ENCODE measurements at regions of chr12 and their contacts with region 1.

Region 1: GRCh38 chr12:111664961-111665865 is 20.5 kb downstream of the BRAP start:
- DNase-seq: no peak
- ATAC-seq: no peak
- H3K4me3 ChIP-seq: no peak overlapping the region
- H3K27ac ChIP-seq: no peak overlapping the region
- H3K4me1 ChIP-seq: no peaks in the 10 kb centered on the region
- H3K27me3 ChIP-seq: no peaks in the 10 kb centered on the region
- CTCF ChIP-seq: no peak

Region 2: DNA sequence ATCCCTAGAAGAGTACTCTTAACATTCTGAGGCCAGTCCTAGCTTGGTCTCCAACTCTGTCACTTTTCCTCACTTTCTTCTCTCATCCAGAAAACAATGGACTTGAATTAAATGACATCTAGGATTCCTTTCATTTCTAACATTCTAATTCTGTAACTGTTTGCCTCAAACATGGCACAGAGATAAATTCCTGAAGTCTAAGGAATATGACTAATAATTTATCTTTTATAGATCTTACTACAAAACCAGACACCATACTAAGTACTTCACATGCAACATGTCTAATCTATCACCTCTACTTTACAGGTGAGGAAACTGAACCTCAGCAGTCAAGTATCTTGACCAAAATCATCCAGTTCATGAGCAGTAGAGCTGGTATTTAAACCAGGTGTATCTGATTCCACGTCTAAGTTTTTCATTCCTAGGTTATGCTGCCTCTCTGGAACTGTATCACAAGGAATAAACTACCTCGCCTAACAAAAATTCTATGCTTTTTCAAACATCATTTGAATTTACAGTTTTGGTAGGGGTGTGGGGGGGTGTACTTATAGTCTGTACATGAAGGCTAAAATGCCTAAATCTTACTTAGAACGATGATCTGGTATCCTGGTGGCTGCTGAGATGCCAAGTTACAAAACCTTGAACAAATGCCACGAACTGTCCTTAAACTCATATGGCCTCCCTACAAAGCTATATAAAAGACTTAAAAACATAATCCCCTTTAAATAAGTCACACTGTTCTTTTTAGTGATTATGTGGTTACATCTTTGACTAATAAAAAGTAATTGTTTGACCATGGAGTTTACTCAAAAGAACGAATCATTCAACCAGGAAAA is 107.7 kb before region 1 on chr12:
- CTCF ChIA-PET with region 1: no interaction called
- POLR2A ChIA-PET with region 1: interaction called, 10 read pairs
- in situ Hi-C with region 1: no loop called
- intact Hi-C with region 1: no loop called
- DNase-seq: no peak
- ATAC-seq: 0 out of 2 replicates have a peak, but pooled peaks have one; percentile 46
- H3K4me3 ChIP-seq: no peak overlapping the region
- H3K27ac ChIP-seq: no peak overlapping the region
- H3K4me1 ChIP-seq: peaks cover 28% of the 10 kb centered on the region
- H3K27me3 ChIP-seq: no peaks in the 10 kb centered on the region
- CTCF ChIP-seq: no peak

Region 3: GRCh38 chr12:111599459-111600204 is 65.6 kb before region 1 on chr12:
- CTCF ChIA-PET with region 1: no interaction called
- POLR2A ChIA-PET with region 1: no interaction called
- in situ Hi-C with region 1: no loop called
- intact Hi-C with region 1: no loop called
- DNase-seq: peak; percentile 36
- ATAC-seq: peak; percentile 88
- H3K4me3 ChIP-seq: peak overlapping the region; percentile 78 to 91
- H3K27ac ChIP-seq: peak overlapping the region; percentile 98
- H3K4me1 ChIP-seq: peaks cover 13% of the 10 kb centered on the region
- H3K27me3 ChIP-seq: no peaks in the 10 kb centered on the region
- CTCF ChIP-seq: no peak

Region 4: DNA sequence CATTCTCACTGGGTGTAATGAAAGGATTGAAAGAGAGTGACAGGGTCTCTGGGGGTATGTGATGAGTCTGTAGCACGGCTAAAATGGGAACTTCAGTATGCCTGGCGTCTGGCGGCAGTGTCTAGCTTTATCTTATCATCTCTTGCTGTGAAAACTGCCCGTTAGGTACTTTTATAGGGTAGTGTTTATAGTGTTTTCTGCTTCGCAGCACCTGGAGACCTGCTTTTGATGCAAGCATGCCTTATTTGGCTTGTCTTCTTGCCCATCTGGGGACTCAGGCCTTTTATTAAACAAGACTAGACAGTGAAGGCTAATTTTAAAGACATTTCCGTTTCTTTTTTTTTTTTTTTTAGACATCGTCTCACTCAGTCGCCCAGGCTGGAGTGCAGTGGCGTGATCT is 65.2 kb after region 1 on chr12:
- CTCF ChIA-PET with region 1: no interaction called
- POLR2A ChIA-PET with region 1: no interaction called
- in situ Hi-C with region 1: no loop called
- intact Hi-C with region 1: no loop called
- DNase-seq: no peak
- ATAC-seq: no peak
- H3K4me3 ChIP-seq: no peak overlapping the region
- H3K27ac ChIP-seq: no peak overlapping the region
- H3K4me1 ChIP-seq: no peaks in the 10 kb centered on the region
- H3K27me3 ChIP-seq: no peaks in the 10 kb centered on the region
- CTCF ChIP-seq: no peak

Measured in Panc1 (cell line).